Posterior cingulate gyrus (tissue), 11 donors: ENCODE measurements at regions of chr15 and their contacts with region 1.

Region 1: GRCh38 chr15:90954712-90955671 is at the start of gene RCCD1:
- DNase-seq: peak; percentile 92 to 99 (median 97)

Region 2: DNA sequence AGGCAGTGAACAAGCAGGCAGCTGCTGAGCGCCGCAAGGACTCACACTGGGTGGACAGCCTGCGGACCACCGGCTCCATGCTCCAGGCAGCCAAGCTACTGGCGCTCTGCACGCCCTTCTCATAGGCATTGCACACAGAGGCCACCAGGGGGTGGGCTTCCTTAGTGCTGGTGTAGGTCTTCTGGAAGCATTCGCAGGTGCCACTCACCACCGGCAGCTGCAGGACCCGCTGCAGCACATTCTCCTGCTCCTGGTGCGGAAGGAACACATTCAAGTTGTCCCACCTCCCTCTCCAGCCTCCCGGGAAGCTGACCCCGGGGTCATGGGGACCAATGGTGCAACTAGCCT is 1281.9 kb before region 1 on chr15:
- intact Hi-C with region 1: no loop called
- DNase-seq: peak in 1 of 10 donors; percentile 83

Region 3: DNA sequence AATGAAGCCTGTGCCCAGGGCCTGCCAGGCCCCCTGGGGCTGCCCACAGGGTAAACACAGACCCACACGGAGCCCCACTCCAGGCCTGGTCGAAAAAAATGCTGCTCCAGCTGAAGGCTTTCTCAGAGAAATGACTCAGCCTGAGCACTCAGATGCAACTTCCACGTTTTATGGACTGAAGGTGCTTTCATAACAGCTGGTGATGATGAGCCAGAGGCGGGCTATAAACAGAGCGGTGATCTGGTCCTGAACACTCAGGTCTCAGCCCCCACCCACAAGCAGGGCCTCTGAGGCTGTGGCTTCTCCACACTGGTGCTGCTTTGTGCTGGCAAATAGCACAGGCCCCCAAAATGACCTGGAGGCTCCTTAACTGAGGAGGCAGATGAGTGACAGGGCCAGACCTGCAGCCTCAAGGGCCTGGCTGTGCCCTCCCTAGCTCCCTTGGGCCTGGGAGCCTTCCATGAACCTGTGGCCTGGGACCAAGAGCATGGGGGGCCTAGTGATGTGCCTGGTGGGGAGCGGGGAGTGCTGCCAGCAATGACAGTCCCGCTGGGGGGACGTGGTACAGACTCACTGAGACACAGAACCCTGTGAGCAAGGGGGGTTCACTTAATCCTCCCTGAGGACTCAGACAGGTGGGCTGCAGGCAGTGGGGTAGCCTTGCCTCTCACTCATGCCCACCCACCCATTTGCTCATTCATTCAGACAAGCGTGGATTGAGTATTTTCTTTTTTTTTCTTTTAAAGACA is 109.6 kb before region 1 on chr15:
- intact Hi-C with region 1: no loop called
- DNase-seq: no peak

Region 4: GRCh38 chr15:90994417-90995311 is 39.7 kb after region 1 on chr15 and contains the start of gene PRC1:
- intact Hi-C with region 1: loop called (anchors 5 kb)
- DNase-seq: peak; percentile 94 to 100 (median 98)

Region 5: DNA sequence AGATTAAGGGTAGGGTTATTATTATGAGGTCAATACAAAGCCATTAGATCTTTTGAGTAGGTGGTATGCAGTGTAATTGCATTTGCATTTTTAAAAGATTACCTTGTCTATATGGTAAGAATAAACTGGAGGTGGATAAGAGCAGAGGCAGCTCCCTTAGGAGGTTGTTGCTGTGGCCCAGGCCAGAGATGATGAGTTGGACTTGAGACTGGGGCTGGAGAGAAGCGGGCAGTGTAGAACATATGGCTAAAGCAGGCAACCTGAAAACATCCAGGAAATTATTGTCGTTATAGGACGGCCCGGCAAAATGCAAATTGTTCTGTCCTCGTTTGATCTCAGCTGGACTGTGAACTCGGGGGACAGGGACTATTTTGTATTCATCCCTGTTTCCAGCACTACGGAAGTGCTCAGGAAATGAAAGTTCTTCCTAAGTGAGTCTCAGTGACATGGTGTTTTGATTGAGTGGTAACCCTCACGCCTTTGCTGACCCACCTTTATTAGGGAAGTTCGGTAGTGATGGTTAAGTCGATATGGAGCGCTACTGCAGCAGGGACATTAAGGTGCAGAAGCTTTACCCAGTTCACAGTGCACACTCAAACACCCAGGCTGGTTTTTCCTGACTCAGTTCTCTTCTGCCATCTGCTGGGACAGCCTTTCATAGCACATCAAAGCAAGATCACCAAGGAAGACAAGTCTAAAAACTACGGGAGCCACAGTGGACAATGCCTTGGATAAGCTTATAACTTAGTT is 94.6 kb after region 1 on chr15:
- intact Hi-C with region 1: loop called (anchors 1 kb)
- DNase-seq: peak in 7 of 10 donors; percentile 28 to 89 (median 65)

Region 6: GRCh38 chr15:91271565-91272153 is 316.7 kb after region 1 on chr15:
- intact Hi-C with region 1: loop called (anchors 2 kb)
- DNase-seq: peak in 8 of 10 donors; percentile 26 to 86 (median 66)